Ovary (tissue), 10 donors: ENCODE measurements at regions of chr1 and their contacts with region 1.

Region 1: GRCh38 chr1:205711104-205712020 is 31.1 kb upstream of the SLC45A3 start:
- DNase-seq: peak in 3 of 5 donors; percentile 58 to 74 (median 63)
- H3K4me3 ChIP-seq: no peak overlapping the region
- H3K27ac ChIP-seq: no peak overlapping the region
- H3K4me1 ChIP-seq: peaks cover 7% of the 10 kb centered on the region
- H3K27me3 ChIP-seq: no peaks in the 10 kb centered on the region
- CTCF ChIP-seq: peak; percentile 55 to 79 (median 73)
- EP300 ChIP-seq: no peak
- POLR2A ChIP-seq: no peak

Region 2: DNA sequence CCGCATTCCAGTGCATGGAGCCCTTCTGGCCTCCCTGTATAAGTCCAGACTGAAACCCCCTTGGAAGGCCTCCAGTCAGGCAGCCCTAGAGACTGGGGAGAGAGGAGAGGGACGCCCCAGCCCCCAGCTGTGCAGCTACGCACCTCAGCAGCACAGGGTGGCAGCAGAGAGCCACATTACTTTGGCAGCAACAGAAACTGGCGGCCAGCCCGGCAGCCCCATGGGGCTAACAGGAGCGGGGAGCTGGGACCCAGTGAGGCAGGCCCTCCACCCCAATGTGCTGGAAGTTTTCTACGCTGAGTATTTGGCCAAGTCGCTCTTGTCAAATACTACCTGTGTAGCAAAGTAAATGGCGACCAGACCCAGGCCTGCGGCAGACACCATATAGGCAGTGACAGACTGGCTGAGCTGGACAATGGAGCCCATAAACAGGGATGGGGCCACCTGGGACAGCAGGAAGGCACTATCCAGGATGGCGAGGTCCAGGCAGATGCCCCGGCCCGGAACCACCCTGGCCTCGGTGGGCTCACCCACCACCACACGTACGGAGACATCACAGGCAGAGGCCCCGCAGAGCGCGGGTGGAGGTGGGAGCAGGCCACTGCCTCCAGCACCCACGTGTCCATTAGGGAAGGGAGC is 52.3 kb before region 1 on chr1:
- intact Hi-C with region 1: loop called (anchors 5 to 10 kb)
- DNase-seq: peak; percentile 80 to 91 (median 86)
- H3K4me3 ChIP-seq: no peak overlapping the region
- H3K27ac ChIP-seq: no peak overlapping the region
- H3K4me1 ChIP-seq: peaks cover 3% of the 10 kb centered on the region
- H3K27me3 ChIP-seq: no peaks in the 10 kb centered on the region
- CTCF ChIP-seq: peak; percentile 68 to 91 (median 84)
- EP300 ChIP-seq: no peak
- POLR2A ChIP-seq: no peak

Region 3: GRCh38 chr1:205668951-205669340 is 42.4 kb before region 1 on chr1:
- intact Hi-C with region 1: loop called in 3 of 4 experiments (anchors 5 to 10 kb)
- DNase-seq: no peak
- H3K4me3 ChIP-seq: no peak overlapping the region
- H3K27ac ChIP-seq: no peak overlapping the region
- H3K4me1 ChIP-seq: peaks cover 2% of the 10 kb centered on the region
- H3K27me3 ChIP-seq: no peaks in the 10 kb centered on the region
- CTCF ChIP-seq: no peak
- EP300 ChIP-seq: no peak
- POLR2A ChIP-seq: no peak

Region 4: GRCh38 chr1:205678286-205679111 is 32.9 kb before region 1 on chr1:
- intact Hi-C with region 1: loop called in 1 of 4 experiments (anchors 2 kb)
- DNase-seq: peak; percentile 54 to 75 (median 65)
- H3K4me3 ChIP-seq: peak overlapping the region; percentile 41
- H3K27ac ChIP-seq: peak overlapping the region; percentile 17 to 41
- H3K4me1 ChIP-seq: peaks cover 16% of the 10 kb centered on the region
- H3K27me3 ChIP-seq: no peaks in the 10 kb centered on the region
- CTCF ChIP-seq: no peak
- EP300 ChIP-seq: no peak
- POLR2A ChIP-seq: no peak